ENCODE measurements at regions of chr1 and their contacts with region 1.

Region 1: DNA sequence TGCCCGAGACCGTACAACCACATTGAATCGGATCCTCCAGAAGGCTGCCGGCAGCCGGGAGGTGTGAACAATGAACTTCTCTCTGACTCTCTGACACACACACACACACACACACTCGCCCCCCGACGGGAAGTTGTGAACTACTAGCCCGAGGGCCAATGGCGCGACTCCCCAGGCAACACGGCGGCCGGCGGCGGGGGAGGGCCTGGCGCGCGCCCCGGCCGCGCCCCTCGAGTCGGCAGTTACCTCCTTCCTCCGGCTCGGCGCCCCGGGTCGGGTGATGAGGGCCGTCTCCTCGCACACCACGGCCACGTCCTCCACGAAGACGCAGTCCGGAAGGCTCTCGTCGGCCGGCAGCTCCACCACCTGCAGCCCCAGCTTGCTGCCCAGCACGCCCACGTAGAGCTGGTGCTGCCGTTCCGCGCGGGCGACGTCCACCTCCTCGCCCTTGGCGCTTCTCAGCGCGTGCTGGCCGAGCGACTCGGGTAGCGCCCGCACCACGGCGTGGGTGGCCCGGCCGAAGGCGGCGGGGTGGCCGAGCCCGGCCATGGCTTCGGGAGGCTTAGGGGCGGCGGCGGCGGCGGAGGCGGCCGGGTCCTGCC is 361 bp downstream of the DDAH1 start:
- DNase-seq: peak; percentile 40
- H3K4me3 Mint-ChIP-seq: peak overlapping the region; percentile 0
- H3K27ac Mint-ChIP-seq: no peak overlapping the region
- H3K4me1 Mint-ChIP-seq: peaks cover 4% of the 10 kb centered on the region
- H3K27me3 Mint-ChIP-seq: peaks cover 40% of the 10 kb centered on the region

Region 2: DNA sequence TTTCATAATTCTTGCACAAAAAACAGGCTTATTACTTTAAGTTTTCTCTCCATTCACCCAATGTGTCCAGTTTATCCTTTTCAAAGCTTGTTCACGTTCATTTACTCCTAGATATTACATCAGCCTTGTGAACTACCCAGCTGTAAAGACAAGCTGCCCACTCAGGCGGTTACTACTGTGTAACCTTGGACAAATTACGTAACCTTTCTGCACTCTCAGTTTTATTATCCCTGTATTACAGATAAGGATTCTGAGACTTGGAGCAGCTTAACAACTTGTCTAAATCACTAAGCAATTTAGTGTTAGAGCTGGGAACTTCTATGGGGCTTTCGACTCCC is 551.1 kb before region 1 on chr1:
- CTCF ChIA-PET with region 1: no interaction called
- POLR2A ChIA-PET with region 1: no interaction called
- intact Hi-C with region 1: no loop called
- DNase-seq: no peak
- H3K4me3 Mint-ChIP-seq: no peak overlapping the region
- H3K27ac Mint-ChIP-seq: no peak overlapping the region
- H3K4me1 Mint-ChIP-seq: no peaks in the 10 kb centered on the region
- H3K27me3 Mint-ChIP-seq: peaks cover 3% of the 10 kb centered on the region

Region 3: DNA sequence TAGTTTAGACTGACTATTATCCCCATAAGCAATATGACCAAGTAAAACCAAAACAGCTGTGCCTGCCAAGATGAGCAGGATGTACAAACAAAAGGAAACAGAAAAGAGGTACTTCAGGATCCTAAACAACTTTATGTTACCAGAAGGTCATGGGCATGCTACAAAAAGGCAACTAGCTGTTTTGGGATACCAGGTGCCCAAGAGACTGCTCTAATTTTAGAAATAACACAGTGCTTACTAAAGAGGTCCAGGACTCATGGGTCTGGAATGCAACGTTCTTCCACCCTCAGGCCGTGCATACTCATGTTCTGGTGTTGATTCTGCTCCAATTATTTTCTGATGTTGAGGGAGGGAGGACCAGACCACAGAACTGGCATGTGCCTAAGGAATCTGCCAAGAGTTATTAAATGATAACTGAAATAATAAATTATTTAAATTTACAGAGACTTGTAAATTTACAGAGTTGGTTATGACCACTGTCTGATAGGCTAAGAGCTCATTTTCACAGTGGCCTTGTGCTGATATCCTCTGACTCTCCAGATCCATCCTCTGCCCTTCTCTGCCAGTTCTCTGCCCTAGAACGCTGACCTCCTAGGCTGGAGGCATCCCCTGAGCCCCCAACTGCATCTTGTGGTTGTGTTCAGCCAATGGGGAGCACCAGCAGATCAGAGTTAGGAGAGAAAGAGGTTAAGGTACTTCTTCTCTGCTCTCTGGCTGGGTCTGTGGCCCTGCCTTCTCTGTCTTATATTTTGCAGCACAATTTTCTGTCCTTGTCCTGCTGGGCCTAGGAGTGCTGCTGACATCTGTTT is 150.5 kb before region 1 on chr1:
- CTCF ChIA-PET with region 1: no interaction called
- POLR2A ChIA-PET with region 1: no interaction called
- intact Hi-C with region 1: loop called (anchors 10 kb)
- DNase-seq: no peak
- H3K4me3 Mint-ChIP-seq: no peak overlapping the region
- H3K27ac Mint-ChIP-seq: no peak overlapping the region
- H3K4me1 Mint-ChIP-seq: no peaks in the 10 kb centered on the region
- H3K27me3 Mint-ChIP-seq: peaks cover 50% of the 10 kb centered on the region

Measured in activated CD4-positive, alpha-beta memory T cell treated with anti-CD3 and anti-CD28 coated beads for 36 hours (primary cell).